ENCODE measurements at regions of chr14 and their contacts with region 1.

Region 1: GRCh38 chr14:68816262-68816942 is 23.5 kb upstream of the ZFP36L1 start:
- DNase-seq: no peak
- ATAC-seq: peak; percentile 69
- H3K4me3 ChIP-seq: peak overlapping the region; percentile 35 to 57
- H3K27ac ChIP-seq: peak overlapping the region; percentile 99
- H3K4me1 ChIP-seq: peaks cover 78 to 80% of the 10 kb centered on the region in 2 experiments
- H3K27me3 ChIP-seq: no peaks in the 10 kb centered on the region
- CTCF ChIP-seq: peak in 2 of 3 experiments; percentile 84 to 93; a peak in 4 of 6 replicates
- POLR2A ChIP-seq: no peak
- RAD21 ChIP-seq: no peak

Region 2: GRCh38 chr14:67837011-67837624 is 979.3 kb before region 1 on chr14:
- CTCF ChIA-PET with region 1: no interaction called
- POLR2A ChIA-PET with region 1: no interaction called
- RAD21 ChIA-PET with region 1: no interaction called
- intact Hi-C with region 1: loop called (anchors 5 kb)
- DNase-seq: peak; percentile 72
- ATAC-seq: peak; percentile 67
- H3K4me3 ChIP-seq: no peak overlapping the region
- H3K27ac ChIP-seq: no peak overlapping the region
- H3K4me1 ChIP-seq: no peaks in the 10 kb centered on the region
- H3K27me3 ChIP-seq: no peaks in the 10 kb centered on the region
- CTCF ChIP-seq: peak; percentile 63 to 83 (median 66)
- POLR2A ChIP-seq: no peak
- RAD21 ChIP-seq: peak; percentile 82

Region 3: DNA sequence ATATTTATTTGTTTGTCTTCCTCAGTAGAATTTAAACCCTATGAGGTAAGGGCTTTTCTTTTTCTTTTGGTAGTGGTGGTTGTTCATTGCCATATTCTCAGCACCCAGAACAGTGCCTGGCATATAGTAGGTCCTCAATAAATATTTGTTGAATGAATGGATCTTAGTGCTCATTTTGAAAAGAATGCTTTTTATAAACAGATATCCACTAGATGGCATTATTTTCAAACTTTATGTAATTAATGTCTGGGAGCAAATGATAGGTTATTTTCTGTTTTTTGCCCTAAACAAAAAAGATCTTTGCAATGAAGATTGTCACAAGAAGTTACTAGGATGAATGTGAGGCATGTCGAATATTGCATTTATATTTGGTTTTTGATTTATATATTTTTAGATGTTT is 932.7 kb before region 1 on chr14:
- CTCF ChIA-PET with region 1: interaction called, 4 read pairs
- POLR2A ChIA-PET with region 1: no interaction called
- RAD21 ChIA-PET with region 1: no interaction called
- intact Hi-C with region 1: loop called (anchors 1 kb)
- DNase-seq: no peak
- ATAC-seq: no peak
- H3K4me3 ChIP-seq: no peak overlapping the region
- H3K27ac ChIP-seq: no peak overlapping the region
- H3K4me1 ChIP-seq: no peaks in the 10 kb centered on the region; a peak in 1 of 4 replicates
- H3K27me3 ChIP-seq: no peaks in the 10 kb centered on the region
- CTCF ChIP-seq: peak; percentile 8 to 46 (median 28); a peak in 2 of 6 replicates
- POLR2A ChIP-seq: no peak
- RAD21 ChIP-seq: peak; percentile 50; the same call in 1 of the 2 replicates

Region 4: DNA sequence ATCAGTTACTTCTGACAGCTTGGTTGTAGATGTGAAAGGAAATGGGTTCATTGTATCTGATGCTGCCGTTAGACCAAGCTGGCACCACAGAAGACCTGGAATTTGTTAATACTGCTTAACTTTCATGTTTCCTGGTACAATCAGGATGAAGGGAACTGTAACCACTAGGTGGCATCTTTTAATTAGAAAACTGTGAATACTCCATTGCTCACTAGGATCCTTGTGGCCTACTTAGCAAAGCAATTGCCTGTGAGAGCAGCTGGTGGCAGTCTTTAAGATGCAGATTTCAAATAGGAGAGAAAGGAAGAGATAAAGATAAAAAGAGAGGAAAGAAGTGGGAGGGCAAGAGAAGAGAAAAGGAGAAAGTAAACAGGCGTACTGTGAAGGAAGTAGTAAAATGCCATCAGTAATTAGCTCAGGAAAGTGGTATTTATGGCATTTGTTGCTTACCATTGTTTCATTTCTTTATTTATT is 882.4 kb before region 1 on chr14:
- CTCF ChIA-PET with region 1: interaction called, 10 read pairs
- POLR2A ChIA-PET with region 1: interaction called, 3 read pairs
- RAD21 ChIA-PET with region 1: no interaction called
- intact Hi-C with region 1: loop called (anchors 2 kb)
- DNase-seq: peak; percentile 71
- ATAC-seq: peak; percentile 97
- H3K4me3 ChIP-seq: no peak overlapping the region
- H3K27ac ChIP-seq: peak overlapping the region; percentile 49; the same call in 1 of the 2 replicates
- H3K4me1 ChIP-seq: peaks cover 5 to 18% of the 10 kb centered on the region in 2 experiments; a peak in 1 of 4 replicates
- H3K27me3 ChIP-seq: no peaks in the 10 kb centered on the region
- CTCF ChIP-seq: peak; percentile 54 to 91 (median 80)
- POLR2A ChIP-seq: no peak
- RAD21 ChIP-seq: peak; percentile 88

Region 5: DNA sequence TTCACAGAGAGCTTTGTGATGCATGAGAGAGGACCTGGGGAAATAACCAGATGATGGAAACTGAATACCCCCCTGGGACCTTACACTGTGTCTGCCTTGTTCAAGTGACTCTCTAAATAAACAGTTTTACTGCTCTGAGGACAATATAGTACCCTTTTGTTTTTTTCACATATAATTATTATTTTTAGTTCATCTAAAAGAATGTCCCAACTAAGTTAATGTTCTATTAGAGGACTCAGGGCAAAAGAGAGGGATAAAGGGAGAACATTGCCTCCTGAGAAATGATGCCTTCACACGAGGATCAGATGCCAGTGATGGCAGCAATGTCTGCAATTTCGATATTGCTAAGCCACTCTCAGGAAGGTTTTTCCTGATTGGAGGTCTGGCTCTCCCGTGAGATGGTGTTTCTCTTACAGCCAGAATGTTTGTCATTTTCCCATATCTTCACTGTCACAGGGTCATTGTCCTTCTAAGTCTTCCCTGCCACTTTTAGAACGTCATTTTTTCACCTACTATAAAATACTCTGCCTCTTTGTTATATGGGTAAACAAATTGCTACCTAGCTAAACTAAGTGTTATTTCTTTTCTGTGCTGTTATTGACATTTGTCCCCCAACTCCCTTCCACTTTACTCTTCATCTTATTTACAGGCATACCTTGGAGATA is 795.3 kb before region 1 on chr14:
- CTCF ChIA-PET with region 1: no interaction called
- POLR2A ChIA-PET with region 1: no interaction called
- RAD21 ChIA-PET with region 1: no interaction called
- intact Hi-C with region 1: no loop called
- DNase-seq: no peak
- ATAC-seq: no peak
- H3K4me3 ChIP-seq: no peak overlapping the region
- H3K27ac ChIP-seq: no peak overlapping the region
- H3K4me1 ChIP-seq: peaks cover 0 to 10% of the 10 kb centered on the region in 2 experiments; a peak in 2 of 4 replicates
- H3K27me3 ChIP-seq: no peaks in the 10 kb centered on the region
- CTCF ChIP-seq: no peak
- POLR2A ChIP-seq: no peak
- RAD21 ChIP-seq: no peak

Region 6: GRCh38 chr14:68084256-68084655 is 732.1 kb before region 1 on chr14:
- CTCF ChIA-PET with region 1: interaction called, 4 read pairs
- POLR2A ChIA-PET with region 1: no interaction called
- RAD21 ChIA-PET with region 1: no interaction called
- intact Hi-C with region 1: loop called (anchors 10 kb)
- DNase-seq: no peak
- ATAC-seq: 0 out of 2 replicates have a peak, but pooled peaks have one; percentile 39
- H3K4me3 ChIP-seq: no peak overlapping the region
- H3K27ac ChIP-seq: peak overlapping the region; percentile 74
- H3K4me1 ChIP-seq: peaks cover 16 to 87% of the 10 kb centered on the region in 2 experiments
- H3K27me3 ChIP-seq: no peaks in the 10 kb centered on the region
- CTCF ChIP-seq: peak; percentile 15 to 45 (median 25); a peak in 3 of 6 replicates
- POLR2A ChIP-seq: no peak
- RAD21 ChIP-seq: peak; percentile 76

Region 7: DNA sequence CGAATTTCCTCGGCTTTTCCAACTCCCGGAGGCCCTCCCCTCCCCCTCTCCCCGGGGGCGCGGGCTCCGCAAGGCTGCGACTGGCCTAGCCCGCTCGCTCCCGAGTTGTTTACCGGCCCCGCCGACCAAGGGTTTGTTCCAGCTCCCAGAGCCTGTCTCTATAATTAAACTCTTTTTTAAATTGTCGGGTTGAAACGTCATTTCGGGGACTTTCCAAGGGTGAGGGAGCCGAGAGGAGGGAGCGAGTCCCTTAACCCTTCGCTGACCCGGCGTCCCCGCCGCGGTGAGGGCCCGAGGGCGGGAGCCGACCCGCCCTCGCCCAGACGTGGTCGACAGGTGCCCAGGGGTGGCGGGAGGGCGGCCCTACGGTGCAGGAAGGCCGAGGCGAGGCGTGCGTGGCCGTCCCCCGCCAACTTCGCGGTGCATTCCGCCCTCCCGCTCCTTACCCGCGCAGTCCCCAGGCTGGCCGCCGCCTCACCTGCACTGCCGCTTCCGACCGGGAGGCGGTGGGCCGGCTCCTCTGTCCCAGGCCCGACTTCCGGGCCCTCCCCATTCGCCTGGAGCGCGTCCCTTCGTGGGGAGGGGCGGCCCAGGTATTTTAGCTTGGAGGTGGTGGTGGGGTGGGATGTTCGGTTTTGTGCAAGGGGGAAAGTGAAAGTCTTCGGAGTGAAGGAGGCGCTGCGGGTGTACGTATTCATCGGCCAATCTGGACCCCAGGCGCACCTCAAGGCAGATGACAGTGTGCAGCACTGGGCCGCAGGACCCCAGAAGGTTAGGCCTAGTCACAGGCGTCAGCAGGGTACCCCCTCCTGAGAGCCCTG is 20.6 kb before region 1 on chr14:
- CTCF ChIA-PET with region 1: interaction called, 3 read pairs
- POLR2A ChIA-PET with region 1: interaction called, 120 read pairs
- RAD21 ChIA-PET with region 1: interaction called in 1 of 2 experiments, 12 read pairs
- intact Hi-C with region 1: loop called (anchors 2 kb)
- DNase-seq: no peak
- ATAC-seq: peak; percentile 68
- H3K4me3 ChIP-seq: peak overlapping the region; percentile 83 to 89
- H3K27ac ChIP-seq: peak overlapping the region; percentile 99
- H3K4me1 ChIP-seq: peaks cover 27 to 57% of the 10 kb centered on the region in 2 experiments
- H3K27me3 ChIP-seq: no peaks in the 10 kb centered on the region
- CTCF ChIP-seq: peak in 2 of 3 experiments; percentile 58 to 71; a peak in 4 of 6 replicates
- POLR2A ChIP-seq: no peak
- RAD21 ChIP-seq: no peak

Measured in HCT116 (cell line).